PC-9 (cell line): ENCODE measurements at regions of chr1 and their contacts with region 1.

Region 1: GRCh38 chr1:230972855-230973271 is 5.8 kb downstream of the TTC13 start:
- DNase-seq: peak in 1 of 2 experiments; percentile 55
- H3K4me3 ChIP-seq: no peak overlapping the region
- H3K27ac ChIP-seq: peak overlapping the region; percentile 30; the same call in 1 of the 2 replicates
- H3K4me1 ChIP-seq: peaks cover 12% of the 10 kb centered on the region
- H3K27me3 ChIP-seq: no peaks in the 10 kb centered on the region
- CTCF ChIP-seq: no peak

Region 2: GRCh38 chr1:230818367-230818766 is 154.5 kb before region 1 on chr1:
- CTCF ChIA-PET with region 1: no interaction called
- POLR2A ChIA-PET with region 1: no interaction called
- intact Hi-C with region 1: no loop called
- DNase-seq: no peak
- H3K4me3 ChIP-seq: no peak overlapping the region
- H3K27ac ChIP-seq: no peak overlapping the region
- H3K4me1 ChIP-seq: 0 out of 2 replicates have a peak, but pooled peaks cover under 1% of the 10 kb centered on the region
- H3K27me3 ChIP-seq: no peaks in the 10 kb centered on the region
- CTCF ChIP-seq: no peak

Region 3: GRCh38 chr1:230948301-230948700 is 24.6 kb before region 1 on chr1:
- CTCF ChIA-PET with region 1: no interaction called
- POLR2A ChIA-PET with region 1: interaction called, 26 read pairs
- intact Hi-C with region 1: no loop called
- DNase-seq: no peak
- H3K4me3 ChIP-seq: no peak overlapping the region
- H3K27ac ChIP-seq: no peak overlapping the region
- H3K4me1 ChIP-seq: no peaks in the 10 kb centered on the region
- H3K27me3 ChIP-seq: no peaks in the 10 kb centered on the region
- CTCF ChIP-seq: no peak